ENCODE measurements at regions of chr3 and their contacts with region 1.

Region 1: DNA sequence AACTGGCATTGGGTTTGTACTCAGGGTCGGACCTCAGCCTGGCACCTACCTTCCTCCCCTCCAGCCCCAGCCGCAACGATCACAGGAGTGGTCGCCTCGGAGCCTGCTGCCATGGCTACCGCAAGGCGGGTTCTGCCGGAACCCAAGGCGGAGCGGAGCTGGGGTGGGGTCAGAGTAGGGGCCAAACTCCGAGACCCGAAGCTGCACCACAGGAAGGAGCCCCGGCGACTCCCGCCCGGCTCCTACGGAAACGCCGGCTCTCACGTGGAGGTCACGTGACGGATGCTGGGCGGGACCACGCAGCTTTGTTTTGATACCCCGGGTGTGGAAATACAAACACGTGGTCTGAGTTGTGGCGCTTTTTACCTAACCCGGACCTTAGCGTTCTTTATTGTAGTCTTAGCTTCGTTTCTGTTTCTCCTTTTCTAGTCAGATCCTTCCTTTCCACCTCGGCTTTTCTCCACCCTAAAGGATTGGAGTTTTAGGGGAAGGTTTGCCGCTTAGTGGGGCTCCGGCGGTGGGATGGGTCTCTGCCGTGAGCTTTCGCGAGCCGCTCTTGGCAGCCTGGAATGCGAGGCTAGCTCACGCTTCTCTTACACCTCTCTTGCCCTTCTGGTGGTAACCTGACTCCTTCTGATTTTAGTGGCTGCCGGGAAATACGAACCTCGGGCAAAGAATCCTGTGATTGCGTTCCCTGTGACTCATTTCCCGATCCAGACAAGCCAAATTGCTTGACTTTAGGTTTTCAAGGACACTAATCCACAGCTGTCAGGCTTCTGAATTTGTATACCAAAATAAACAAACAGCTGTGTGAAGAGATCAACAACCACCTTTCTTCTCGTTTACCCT is at the start of gene HSPBAP1:
- DNase-seq: peak; percentile 72 to 95 (median 90)
- ATAC-seq: peak; percentile 67
- H3K4me3 ChIP-seq: peak within 1 kb of the TSS; percentile 78 to 81
- H3K4me3 Mint-ChIP-seq: peak within 1 kb of the TSS; percentile 91
- H3K27ac ChIP-seq: peak within 1 kb of the TSS; percentile 77 to 91
- H3K27ac Mint-ChIP-seq: no peak within 1 kb of the TSS
- H3K4me1 ChIP-seq: peaks cover 28% of the 10 kb centered on the region
- H3K4me1 Mint-ChIP-seq: peaks cover 38% of the 10 kb centered on the region
- H3K27me3 ChIP-seq: no peaks in the 10 kb centered on the region
- H3K27me3 Mint-ChIP-seq: no peaks in the 10 kb centered on the region
- CTCF ChIP-seq: no peak
- total RNA-seq, gene HSPBAP1: 8.7 to 9.3 TPM

Region 2: DNA sequence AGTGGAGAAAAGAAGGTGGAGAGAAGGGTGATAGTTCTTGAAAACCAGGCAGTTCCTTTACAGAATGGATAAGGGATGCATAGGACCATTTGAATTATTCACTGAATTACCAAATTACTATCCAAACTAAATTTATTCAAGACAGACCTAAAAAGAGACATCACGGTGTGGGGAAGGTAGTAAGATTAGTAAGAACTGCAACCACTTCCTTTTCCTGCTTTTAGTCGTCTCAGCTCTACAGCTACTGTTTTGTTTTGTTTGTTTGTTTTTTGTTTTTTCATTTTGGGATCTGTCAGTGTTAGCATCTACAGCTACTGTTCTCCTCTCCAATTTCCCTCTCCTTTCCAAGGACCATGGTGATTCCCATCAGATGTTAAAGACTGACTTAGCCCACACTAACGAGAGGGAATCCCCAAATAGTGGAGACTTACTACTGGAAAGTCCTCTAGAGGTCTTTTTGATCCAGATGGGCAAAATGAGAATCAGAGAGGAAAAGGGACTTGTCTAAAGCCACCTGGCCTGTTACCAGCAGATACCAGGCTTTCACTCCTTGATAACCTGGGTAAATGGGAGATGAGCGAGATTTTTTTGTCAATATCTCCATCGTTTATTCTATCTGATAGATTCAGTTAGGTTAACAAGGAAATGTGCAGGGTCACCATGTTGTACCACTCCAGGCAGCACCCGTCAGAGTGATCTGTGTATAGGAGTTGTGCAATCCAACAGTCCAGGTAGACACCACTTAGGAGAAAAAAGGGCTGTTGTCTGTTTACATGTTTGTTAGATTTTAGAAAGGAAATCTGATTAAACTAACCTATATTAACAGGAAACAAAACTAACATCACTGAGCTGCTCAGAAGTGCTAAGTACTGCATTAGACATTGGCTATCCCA is 1139.1 kb before region 1 on chr3:
- CTCF ChIA-PET with region 1: no interaction called
- POLR2A ChIA-PET with region 1: no interaction called
- intact Hi-C with region 1: loop called in 1 of 2 experiments (anchors 10 kb)
- DNase-seq: peak in 2 of 9 experiments; percentile 20 to 51
- ATAC-seq: peak; percentile 81
- H3K4me3 ChIP-seq: peak overlapping the region in 1 of 2 experiments; percentile 7
- H3K4me3 Mint-ChIP-seq: peak overlapping the region; percentile 61
- H3K27ac ChIP-seq: peak overlapping the region; percentile 8 to 70
- H3K27ac Mint-ChIP-seq: peak overlapping the region; percentile 91
- H3K4me1 ChIP-seq: peaks cover 76% of the 10 kb centered on the region
- H3K4me1 Mint-ChIP-seq: peaks cover 86% of the 10 kb centered on the region
- H3K27me3 ChIP-seq: no peaks in the 10 kb centered on the region
- H3K27me3 Mint-ChIP-seq: no peaks in the 10 kb centered on the region
- CTCF ChIP-seq: no peak

Region 3: DNA sequence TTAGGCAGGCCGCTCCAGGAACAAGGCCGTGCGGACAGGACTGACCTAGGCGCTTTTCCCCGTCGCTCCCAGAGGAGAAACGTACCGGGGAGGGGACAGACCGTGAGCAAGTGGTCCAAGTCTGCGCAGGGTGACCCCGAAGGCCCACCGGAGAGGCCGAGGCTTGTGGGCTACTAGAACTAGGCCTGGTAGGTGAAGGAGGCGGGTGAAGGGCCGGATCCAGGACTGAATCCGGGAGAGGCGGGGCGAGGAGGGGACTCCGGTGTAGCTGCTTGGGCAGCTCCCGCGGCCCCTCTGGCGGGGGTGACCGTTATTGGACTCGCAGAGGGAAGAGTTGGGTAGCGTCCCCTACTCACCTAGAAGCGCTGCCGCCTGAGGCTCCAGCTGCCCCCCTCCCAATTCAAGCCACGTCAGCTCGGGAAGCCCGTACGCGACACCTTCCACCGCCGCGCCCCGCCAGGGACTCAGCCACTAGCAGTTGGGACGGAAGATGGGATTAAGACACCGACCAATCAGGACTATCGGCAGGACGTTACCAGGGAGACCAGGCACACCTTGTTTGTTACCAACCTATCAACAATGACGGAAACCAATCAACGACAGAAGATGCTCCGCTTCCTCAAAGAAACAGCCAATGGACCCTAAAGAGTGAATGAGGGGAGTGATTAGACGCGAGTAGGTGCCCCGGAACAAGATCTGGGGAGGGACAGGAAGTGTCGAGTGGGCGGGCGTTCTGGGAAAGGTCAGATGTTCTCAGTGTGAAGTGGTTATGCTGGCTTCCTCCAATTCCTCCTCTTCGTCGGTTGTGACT is 1044.3 kb before region 1 on chr3 and contains the start of gene GOLGB1:
- CTCF ChIA-PET with region 1: no interaction called
- POLR2A ChIA-PET with region 1: no interaction called
- intact Hi-C with region 1: loop called (anchors 2 to 10 kb)
- DNase-seq: peak; percentile 74 to 99 (median 90)
- ATAC-seq: peak; percentile 94
- H3K4me3 ChIP-seq: peak within 1 kb of the TSS; percentile 86 to 94
- H3K4me3 Mint-ChIP-seq: no peak within 1 kb of the TSS
- H3K27ac ChIP-seq: peak within 1 kb of the TSS; percentile 97 to 98
- H3K27ac Mint-ChIP-seq: no peak within 1 kb of the TSS
- H3K4me1 ChIP-seq: peaks cover 19% of the 10 kb centered on the region
- H3K4me1 Mint-ChIP-seq: peaks cover 14% of the 10 kb centered on the region
- H3K27me3 ChIP-seq: peaks cover 0 to 6% of the 10 kb centered on the region in 2 experiments
- H3K27me3 Mint-ChIP-seq: peaks cover 4% of the 10 kb centered on the region
- CTCF ChIP-seq: no peak
- total RNA-seq, gene GOLGB1: 47.4 to 53.9 TPM

Region 4: GRCh38 chr3:122415720-122416654 is 377.8 kb before region 1 on chr3 and contains the start of gene WDR5B:
- CTCF ChIA-PET with region 1: no interaction called
- POLR2A ChIA-PET with region 1: interaction called, 3 read pairs
- intact Hi-C with region 1: loop called (anchors 5 to 10 kb)
- DNase-seq: peak; percentile 97 to 99 (median 98)
- ATAC-seq: peak; percentile 88
- H3K4me3 ChIP-seq: peak within 1 kb of the TSS; percentile 71 to 76
- H3K4me3 Mint-ChIP-seq: peak within 1 kb of the TSS; percentile 97
- H3K27ac ChIP-seq: peak within 1 kb of the TSS; percentile 91 to 94
- H3K27ac Mint-ChIP-seq: peak within 1 kb of the TSS; percentile 100
- H3K4me1 ChIP-seq: peaks cover 26% of the 10 kb centered on the region
- H3K4me1 Mint-ChIP-seq: peaks cover 58% of the 10 kb centered on the region
- H3K27me3 ChIP-seq: no peaks in the 10 kb centered on the region
- H3K27me3 Mint-ChIP-seq: no peaks in the 10 kb centered on the region
- CTCF ChIP-seq: no peak
- total RNA-seq, gene WDR5B: 1.9 to 2.7 TPM

Region 5: GRCh38 chr3:123272547-123272946 is 478.8 kb after region 1 on chr3:
- CTCF ChIA-PET with region 1: no interaction called
- POLR2A ChIA-PET with region 1: no interaction called
- intact Hi-C with region 1: no loop called
- DNase-seq: no peak
- ATAC-seq: no peak
- H3K4me3 ChIP-seq: no peak overlapping the region
- H3K4me3 Mint-ChIP-seq: no peak overlapping the region
- H3K27ac ChIP-seq: no peak overlapping the region
- H3K27ac Mint-ChIP-seq: no peak overlapping the region
- H3K4me1 ChIP-seq: no peaks in the 10 kb centered on the region
- H3K4me1 Mint-ChIP-seq: no peaks in the 10 kb centered on the region
- H3K27me3 ChIP-seq: no peaks in the 10 kb centered on the region
- H3K27me3 Mint-ChIP-seq: no peaks in the 10 kb centered on the region
- CTCF ChIP-seq: no peak